Left ventricle myocardium superior (tissue), 1 donor: ENCODE measurements at regions of chr7 and their contacts with region 1.

Region 1: DNA sequence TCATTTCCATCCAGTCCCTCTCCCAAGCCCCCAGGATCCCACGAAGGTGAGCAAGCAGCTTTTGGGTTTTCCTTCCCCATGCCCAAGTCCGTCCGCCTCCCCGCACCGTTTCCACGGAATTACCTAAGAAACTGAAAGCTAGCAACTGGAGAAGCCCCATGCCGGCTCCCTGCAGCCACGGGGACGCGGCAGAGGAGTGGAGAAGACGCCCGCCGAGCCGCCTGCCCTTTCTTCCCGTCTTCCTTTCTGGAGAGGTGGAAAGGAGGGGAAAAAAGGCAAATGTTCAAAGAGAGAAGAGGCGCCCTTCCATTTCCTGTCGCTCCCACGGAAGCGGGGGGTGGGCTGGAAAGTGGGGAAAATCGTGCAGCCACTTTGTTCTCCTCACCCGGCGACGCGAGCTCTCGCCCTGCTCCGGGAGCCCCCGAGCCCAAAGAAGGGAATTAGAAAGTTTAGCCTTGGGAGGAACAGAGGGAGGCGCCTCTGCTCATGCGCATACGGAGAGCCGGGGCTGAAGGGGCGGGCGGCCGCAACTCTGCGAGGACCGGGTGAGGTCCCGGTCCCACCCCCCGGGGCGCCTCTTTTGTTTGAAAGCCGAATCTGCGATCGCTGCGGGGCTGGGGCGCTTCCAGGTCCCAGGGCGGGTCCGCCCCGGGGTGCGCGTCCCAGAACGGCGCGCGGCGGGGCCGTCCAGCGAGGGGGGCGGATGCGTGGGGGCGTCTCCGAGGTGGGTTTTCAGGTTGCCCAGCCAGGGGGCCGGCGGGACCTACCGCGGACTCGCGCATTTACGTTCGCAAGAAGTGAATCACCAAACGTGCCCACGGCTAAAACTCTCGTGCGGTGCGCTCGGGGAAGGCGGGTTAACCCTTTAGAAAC is at the start of gene LAMB1:
- DNase-seq: peak; percentile 90
- ATAC-seq: peak; percentile 88
- total RNA-seq, gene LAMB1: 56.1 TPM

Region 2: DNA sequence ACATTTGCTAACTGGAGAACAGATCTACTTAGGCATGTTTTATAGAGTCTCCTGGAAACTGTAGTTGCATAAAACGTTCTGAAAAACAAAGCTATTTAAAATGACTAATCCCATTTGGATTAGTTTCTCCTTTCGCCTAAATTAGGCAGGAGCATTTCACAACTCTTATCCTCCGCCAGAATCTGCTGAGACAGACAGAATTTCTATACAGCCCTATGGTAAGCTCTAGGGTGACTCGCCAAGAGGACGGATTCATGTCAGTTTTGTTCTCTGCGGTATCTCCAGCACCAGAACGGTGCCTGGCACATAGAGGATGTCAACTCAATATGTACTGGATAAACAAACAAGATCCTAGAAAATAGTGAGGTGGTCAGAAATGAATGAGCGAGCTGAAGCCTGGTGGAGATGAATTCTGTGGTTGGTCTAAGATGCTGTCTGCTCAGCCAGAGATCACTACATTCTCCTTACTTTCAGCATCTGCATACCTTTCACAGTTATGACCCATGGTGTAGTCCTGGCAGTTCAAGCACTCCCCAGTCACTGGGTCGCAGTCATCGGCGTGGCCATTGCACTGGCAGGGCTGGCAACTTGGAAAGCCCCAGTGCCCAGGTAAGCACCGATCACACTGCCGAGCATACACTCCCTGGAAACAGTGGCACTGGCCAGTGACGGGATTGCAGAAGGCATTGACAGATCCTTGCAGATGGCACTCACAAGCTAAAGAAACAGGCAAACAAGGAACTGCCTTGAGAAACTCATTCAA is 44.0 kb before region 1 on chr7:
- intact Hi-C with region 1: loop called (anchors 10 kb)
- DNase-seq: no peak
- ATAC-seq: peak; percentile 54

Region 3: GRCh38 chr7:108146070-108146837 is 143.3 kb after region 1 on chr7:
- intact Hi-C with region 1: loop called (anchors 10 kb)
- DNase-seq: peak; percentile 28
- ATAC-seq: peak; percentile 92